ENCODE measurements at regions of chr19 and their contacts with region 1.

Region 1: DNA sequence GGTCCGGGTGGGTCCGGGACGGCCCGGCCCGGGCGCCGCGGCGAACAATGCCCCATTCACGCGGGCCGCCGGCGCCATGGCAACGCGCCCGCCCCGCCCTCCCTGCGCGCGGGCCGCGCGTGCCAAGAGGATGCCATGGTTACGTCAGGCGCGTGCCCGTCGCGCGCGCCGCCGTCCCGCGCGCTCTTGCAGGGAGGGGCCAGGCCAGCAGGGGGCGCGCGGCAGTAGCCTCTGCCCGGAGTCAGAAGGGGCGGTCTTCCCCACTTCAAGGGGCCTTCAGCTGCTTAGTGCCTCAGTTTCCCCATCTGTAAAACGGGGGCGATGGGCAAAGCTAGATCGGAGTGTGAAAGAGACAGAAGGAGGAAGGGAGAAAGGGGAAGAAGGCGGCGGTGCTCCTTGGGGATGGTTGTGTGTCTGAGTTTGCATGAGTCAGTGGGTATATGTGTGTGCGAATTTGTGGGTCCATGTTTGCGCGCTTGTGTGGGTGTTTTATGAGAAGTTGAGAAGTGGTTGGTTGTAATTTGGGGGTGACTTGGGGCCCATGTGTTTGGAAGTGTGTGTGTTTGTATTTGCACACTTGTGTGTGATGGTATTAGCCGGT is 11.6 kb upstream of the NFIX start:
- DNase-seq: peak; percentile 74 to 86 (median 76)
- H3K4me3 ChIP-seq: peak overlapping the region in 1 of 3 experiments; percentile 45
- H3K4me3 Mint-ChIP-seq: no peak overlapping the region
- H3K27ac ChIP-seq: no peak overlapping the region
- H3K27ac Mint-ChIP-seq: no peak overlapping the region
- H3K4me1 ChIP-seq: peaks cover 9 to 12% of the 10 kb centered on the region in 2 donors
- H3K4me1 Mint-ChIP-seq: peaks cover 8% of the 10 kb centered on the region
- H3K27me3 ChIP-seq: peaks cover 0 to 6% of the 10 kb centered on the region in 2 donors
- H3K27me3 Mint-ChIP-seq: peaks cover 5 to 8% (median 6%) of the 10 kb centered on the region in 3 donors
- CTCF ChIP-seq: peak; percentile 93

Region 2: DNA sequence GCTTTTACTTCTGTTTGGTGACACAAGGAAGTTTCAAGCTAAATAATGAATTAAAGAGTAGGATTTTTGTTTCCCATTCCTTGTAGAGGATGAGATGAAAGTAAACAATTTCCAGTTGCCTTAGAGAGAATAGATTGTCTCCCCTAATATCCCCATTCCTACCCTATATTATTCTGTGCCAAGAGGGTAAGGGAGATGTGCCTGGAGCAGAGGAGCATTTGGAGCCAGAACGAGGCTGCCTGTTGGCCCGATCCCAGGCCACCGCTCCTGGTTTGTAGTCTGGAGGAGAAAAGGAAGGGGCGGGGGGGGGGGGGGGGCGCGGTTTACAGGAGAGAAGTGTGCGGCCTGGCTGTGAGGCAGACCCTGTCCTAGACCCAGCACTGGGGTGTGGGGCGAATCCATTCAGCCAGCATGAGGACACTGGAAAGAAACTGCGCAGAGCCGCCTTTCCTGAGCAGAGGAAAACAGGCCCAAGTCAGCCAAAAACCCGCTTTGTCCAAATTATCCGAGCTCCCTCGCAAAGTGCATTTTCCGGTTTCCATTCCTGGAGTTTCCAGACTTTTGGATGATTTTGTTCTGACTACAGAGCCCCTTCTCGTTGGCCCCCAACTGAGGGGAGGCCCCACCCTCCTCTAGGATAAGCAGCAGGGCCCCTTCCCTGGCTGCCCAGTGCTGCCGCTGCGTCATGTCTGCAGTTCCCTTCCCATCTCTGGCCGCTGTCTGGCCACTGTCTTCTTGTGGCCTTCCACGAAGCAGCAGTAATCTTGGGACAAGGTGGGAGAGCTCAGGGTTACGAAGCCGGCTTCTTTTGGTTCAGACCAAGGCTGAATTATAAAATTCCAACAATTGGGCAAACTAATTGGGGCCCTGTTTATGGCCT is 34.6 kb after region 1 on chr19:
- intact Hi-C with region 1: loop called in 1 of 2 experiments (anchors 5 kb)
- DNase-seq: no peak
- H3K4me3 ChIP-seq: no peak overlapping the region
- H3K4me3 Mint-ChIP-seq: no peak overlapping the region
- H3K27ac ChIP-seq: no peak overlapping the region
- H3K27ac Mint-ChIP-seq: no peak overlapping the region
- H3K4me1 ChIP-seq: peaks cover 23 to 29% of the 10 kb centered on the region in 2 donors
- H3K4me1 Mint-ChIP-seq: peaks cover 31% of the 10 kb centered on the region
- H3K27me3 ChIP-seq: peaks cover 16 to 35% of the 10 kb centered on the region in 2 donors
- H3K27me3 Mint-ChIP-seq: peaks cover 43 to 55% (median 48%) of the 10 kb centered on the region in 3 donors
- CTCF ChIP-seq: no peak

Region 3: DNA sequence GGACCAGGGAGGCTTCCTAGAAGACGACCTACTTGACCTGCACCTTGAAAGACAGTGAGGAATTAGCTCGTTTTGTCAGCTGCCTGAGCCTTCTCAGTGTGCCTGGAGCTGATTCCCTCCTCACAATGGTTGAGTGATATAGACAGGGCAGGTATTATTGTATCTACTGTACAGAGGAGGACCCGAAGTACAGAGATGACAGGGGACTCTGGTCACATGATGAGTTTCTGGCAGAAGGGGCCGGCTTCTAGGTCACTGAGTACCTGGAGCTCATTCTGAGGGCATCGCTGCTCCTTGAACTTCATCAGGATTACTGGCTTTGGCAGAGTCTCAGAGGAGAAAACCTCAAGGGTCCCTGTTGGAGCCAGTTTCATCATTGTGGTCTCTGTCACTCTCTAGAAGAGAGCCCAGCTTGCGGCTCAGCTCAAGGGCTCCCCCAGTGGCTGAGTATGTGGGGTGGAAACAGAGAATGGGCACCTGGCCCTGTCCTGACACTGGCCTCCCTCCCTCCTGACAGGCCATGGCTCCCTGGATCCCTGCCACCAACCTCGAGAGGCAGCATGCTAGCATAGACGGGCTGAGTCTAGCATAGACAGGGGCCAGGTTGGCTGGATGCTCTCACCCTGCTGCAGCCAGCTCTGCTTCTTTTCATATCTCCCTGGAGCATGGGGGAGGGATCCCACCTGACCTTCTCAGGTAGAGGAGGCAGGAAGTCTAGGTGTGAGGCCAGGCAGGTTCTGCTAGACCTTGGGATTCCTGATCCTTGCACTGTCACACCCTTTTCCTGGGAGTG is 50.4 kb after region 1 on chr19:
- intact Hi-C with region 1: loop called in 1 of 2 experiments (anchors 10 kb)
- DNase-seq: peak; percentile 15 to 27 (median 23)
- H3K4me3 ChIP-seq: no peak overlapping the region
- H3K4me3 Mint-ChIP-seq: no peak overlapping the region
- H3K27ac ChIP-seq: no peak overlapping the region
- H3K27ac Mint-ChIP-seq: no peak overlapping the region
- H3K4me1 ChIP-seq: no peaks in the 10 kb centered on the region
- H3K4me1 Mint-ChIP-seq: peaks cover 6% of the 10 kb centered on the region
- H3K27me3 ChIP-seq: no peaks in the 10 kb centered on the region
- H3K27me3 Mint-ChIP-seq: peaks cover 0 to 5% (median 2%) of the 10 kb centered on the region in 3 donors
- CTCF ChIP-seq: peak; percentile 75

Region 4: GRCh38 chr19:13093407-13094105 is 109.9 kb after region 1 on chr19:
- intact Hi-C with region 1: loop called in 1 of 2 experiments (anchors 2 kb)
- DNase-seq: peak; percentile 84 to 89 (median 88)
- H3K4me3 ChIP-seq: peak overlapping the region in 1 of 3 experiments; percentile 84
- H3K4me3 Mint-ChIP-seq: peak overlapping the region; percentile 46 to 52
- H3K27ac ChIP-seq: no peak overlapping the region
- H3K27ac Mint-ChIP-seq: peak overlapping the region in 1 of 7 donors; percentile 25
- H3K4me1 ChIP-seq: peaks cover 26 to 39% of the 10 kb centered on the region in 2 donors
- H3K4me1 Mint-ChIP-seq: peaks cover 22% of the 10 kb centered on the region
- H3K27me3 ChIP-seq: no peaks in the 10 kb centered on the region
- H3K27me3 Mint-ChIP-seq: peaks cover 0 to 5% (median 3%) of the 10 kb centered on the region in 3 donors
- CTCF ChIP-seq: peak; percentile 97